ENCODE measurements at regions of chr15 and their contacts with region 1.

Region 1: DNA sequence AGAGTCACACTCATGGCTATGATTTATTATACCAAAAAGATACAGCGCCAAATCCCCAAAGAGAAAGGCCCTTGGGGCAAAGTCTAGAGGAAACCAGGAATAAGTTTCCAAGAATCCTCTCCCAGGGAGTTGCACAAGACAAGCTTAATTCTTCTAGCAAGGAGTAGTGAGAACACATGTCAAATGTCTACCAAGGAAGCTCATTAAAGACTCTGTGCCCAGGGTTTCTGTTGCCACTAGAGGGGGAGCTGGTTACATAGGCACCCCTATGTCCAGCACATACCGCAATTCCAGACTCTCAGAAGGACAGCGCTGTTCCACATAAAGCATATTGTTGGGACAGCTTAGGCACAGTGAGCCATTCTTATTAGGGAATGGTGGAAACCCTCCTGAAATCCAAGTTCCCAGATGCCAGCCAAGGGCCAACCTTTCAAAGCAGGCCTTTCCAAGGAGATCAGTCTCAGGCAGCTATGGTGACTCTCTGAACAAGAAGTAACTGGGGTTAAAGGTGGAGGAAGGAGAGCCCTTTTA is 194.2 kb downstream of the UACA start:
- DNase-seq: peak; percentile 61
- H3K4me3 Mint-ChIP-seq: no peak overlapping the region
- H3K27ac Mint-ChIP-seq: no peak overlapping the region
- H3K4me1 Mint-ChIP-seq: peaks cover 14% of the 10 kb centered on the region
- H3K27me3 Mint-ChIP-seq: peaks cover 7% of the 10 kb centered on the region
- CTCF ChIP-seq: peak; percentile 63

Region 2: DNA sequence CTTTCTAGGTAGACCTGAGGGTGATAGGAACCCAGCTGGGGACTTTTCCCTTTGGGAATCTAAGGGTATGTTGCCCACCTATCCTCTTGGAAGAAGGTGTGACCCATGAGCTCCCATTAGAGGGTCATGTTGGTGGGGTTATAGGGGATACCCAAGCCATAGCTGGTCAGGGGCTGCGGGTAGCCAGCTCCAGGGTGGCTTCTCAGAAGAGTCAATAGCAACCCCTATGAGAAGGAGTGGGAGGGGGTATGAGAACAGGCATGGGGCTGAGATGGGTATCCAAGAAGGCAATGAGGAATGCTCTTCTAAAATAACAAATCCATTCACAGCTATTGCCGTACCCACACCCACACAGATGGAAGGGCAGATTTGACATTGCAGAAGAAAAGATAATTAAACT is 23.6 kb before region 1 on chr15:
- CTCF ChIA-PET with region 1: no interaction called
- intact Hi-C with region 1: no loop called
- DNase-seq: no peak
- H3K4me3 Mint-ChIP-seq: no peak overlapping the region
- H3K27ac Mint-ChIP-seq: no peak overlapping the region
- H3K4me1 Mint-ChIP-seq: no peaks in the 10 kb centered on the region
- H3K27me3 Mint-ChIP-seq: no peaks in the 10 kb centered on the region
- CTCF ChIP-seq: no peak

Region 3: DNA sequence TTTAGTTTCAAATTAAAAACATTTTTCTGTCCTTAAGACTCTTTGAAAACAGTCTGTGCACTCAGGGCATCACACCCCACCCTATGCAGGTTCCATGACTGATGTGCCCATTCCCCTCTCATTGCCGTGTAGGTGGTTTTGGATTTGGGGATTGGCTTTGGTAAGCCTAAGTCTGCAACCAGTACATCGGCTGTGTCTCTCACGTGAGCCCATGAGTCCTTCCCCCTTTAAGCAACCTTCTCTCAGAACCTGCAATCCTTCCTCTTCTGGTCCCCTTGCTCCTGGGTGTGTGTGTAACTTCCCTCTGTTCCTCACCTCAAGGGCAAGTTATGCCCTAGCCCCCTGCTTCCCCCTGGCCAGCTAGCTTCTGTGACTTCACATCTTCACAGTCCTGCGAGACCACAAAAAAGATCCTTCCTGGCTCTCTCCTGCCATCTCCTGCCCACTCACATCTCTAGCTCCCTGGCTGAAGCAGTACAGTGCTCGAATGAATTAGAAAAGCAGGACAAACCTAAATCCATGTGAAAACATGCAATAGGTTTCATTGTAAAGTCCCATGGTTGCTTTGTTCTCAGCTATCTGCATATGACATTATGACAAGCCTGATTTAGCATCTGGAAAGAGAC is 67.5 kb after region 1 on chr15:
- CTCF ChIA-PET with region 1: interaction called, 30 read pairs
- intact Hi-C with region 1: loop called (anchors 2 kb)
- DNase-seq: peak; percentile 50
- H3K4me3 Mint-ChIP-seq: no peak overlapping the region
- H3K27ac Mint-ChIP-seq: no peak overlapping the region
- H3K4me1 Mint-ChIP-seq: peaks cover 29% of the 10 kb centered on the region
- H3K27me3 Mint-ChIP-seq: no peaks in the 10 kb centered on the region
- CTCF ChIP-seq: no peak

Measured in Calu3 (cell line).